ENCODE measurements at regions of chr1 and their contacts with region 1.

Region 1: DNA sequence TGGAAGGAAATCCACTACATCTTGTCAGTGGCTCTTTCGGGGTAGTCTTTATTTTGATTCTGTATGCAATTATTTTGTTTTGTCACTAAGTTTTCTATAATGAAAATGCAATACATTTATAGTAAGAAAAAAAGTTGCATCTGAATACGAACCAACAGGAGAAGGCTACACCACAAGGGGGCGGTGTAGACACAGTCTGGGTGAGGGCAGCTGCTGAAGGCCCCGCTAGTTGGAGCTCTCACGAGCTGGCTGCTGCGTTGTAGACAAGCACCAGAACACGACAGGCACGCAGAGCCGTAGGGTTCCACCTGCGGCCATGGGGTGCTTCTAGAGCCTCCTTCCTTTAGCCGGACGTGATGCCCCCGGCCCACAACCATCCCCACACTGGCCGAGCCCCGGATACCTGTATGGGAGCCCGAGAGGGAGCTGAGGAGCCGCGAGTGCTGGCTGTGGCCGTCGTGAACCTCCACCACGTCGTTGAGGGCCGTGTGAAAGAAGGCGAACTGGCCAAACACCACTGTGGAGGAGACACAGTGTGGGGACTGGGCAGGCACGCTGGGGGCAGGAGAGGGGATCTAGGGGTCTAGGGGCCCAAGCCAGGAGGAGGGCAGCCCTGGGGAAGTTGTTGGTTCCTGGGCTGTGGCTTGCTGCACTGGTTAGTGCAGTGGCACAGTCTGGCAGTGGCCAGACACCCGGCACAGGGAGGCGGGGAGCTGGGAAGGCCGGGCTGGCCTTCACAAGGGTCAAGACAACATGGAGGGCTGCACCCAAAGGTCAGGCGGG is 160.8 kb downstream of the ZSCAN20 start:
- DNase-seq: peak; percentile 88 to 93 (median 89)
- ATAC-seq: peak; percentile 35 to 89 (median 84)
- H3K4me3 ChIP-seq: no peak overlapping the region
- H3K27ac ChIP-seq: no peak overlapping the region
- H3K4me1 ChIP-seq: peaks cover 0 to 11% (median 0%) of the 10 kb centered on the region in 12 donors
- H3K27me3 ChIP-seq: peaks cover 0 to 19% (median 0%) of the 10 kb centered on the region in 9 donors
- CTCF ChIP-seq: peak; percentile 94 to 100 (median 97)
- POLR2A ChIP-seq: no peak

Region 2: GRCh38 chr1:34597877-34598514 is 964.8 kb after region 1 on chr1:
- intact Hi-C with region 1: loop called in 9 of 10 experiments (anchors 5 to 10 kb)
- DNase-seq: peak; percentile 32 to 71 (median 51)
- ATAC-seq: peak in 3 of 4 donors; percentile 54 to 80 (median 67)
- H3K4me3 ChIP-seq: no peak overlapping the region
- H3K27ac ChIP-seq: no peak overlapping the region
- H3K4me1 ChIP-seq: no peaks in the 10 kb centered on the region
- H3K27me3 ChIP-seq: peaks cover 0 to 35% (median 10%) of the 10 kb centered on the region in 9 donors
- CTCF ChIP-seq: peak; percentile 40 to 76 (median 64)
- POLR2A ChIP-seq: no peak